T-cell (primary cell): ENCODE measurements at regions of chr15 and their contacts with region 1.

Region 1: DNA sequence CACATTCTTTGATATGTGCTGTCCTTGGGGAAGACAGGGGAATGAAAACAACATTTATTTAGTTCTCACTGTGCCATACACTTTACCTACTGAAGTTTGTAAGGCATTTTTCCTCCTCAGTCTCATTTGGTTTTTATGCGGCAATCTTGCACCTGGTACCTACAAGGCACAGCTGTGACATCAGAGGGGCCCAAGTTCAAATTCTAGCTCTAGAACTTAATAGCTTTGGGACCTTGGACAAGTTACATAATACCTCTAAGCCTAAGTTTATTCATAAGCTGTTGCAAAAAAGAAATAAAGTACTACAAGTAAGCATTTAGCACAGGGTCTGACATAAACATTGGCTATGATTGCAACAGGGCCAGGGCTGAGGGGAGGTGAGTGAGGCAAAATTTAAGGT is 5.6 kb upstream of the FAM81A start:
- DNase-seq: no peak
- ATAC-seq: no peak
- H3K4me3 ChIP-seq: no peak overlapping the region
- H3K4me3 Mint-ChIP-seq: no peak overlapping the region
- H3K27ac ChIP-seq: no peak overlapping the region
- H3K27ac Mint-ChIP-seq: no peak overlapping the region
- H3K4me1 ChIP-seq: peaks cover 2 to 4% of the 10 kb centered on the region in 2 experiments
- H3K4me1 Mint-ChIP-seq: peaks cover 9 to 11% (median 10%) of the 10 kb centered on the region in 3 donors
- H3K27me3 ChIP-seq: peaks cover 12 to 23% of the 10 kb centered on the region in 2 experiments
- H3K27me3 Mint-ChIP-seq: peaks cover 54 to 62% of the 10 kb centered on the region in 2 donors

Region 2: DNA sequence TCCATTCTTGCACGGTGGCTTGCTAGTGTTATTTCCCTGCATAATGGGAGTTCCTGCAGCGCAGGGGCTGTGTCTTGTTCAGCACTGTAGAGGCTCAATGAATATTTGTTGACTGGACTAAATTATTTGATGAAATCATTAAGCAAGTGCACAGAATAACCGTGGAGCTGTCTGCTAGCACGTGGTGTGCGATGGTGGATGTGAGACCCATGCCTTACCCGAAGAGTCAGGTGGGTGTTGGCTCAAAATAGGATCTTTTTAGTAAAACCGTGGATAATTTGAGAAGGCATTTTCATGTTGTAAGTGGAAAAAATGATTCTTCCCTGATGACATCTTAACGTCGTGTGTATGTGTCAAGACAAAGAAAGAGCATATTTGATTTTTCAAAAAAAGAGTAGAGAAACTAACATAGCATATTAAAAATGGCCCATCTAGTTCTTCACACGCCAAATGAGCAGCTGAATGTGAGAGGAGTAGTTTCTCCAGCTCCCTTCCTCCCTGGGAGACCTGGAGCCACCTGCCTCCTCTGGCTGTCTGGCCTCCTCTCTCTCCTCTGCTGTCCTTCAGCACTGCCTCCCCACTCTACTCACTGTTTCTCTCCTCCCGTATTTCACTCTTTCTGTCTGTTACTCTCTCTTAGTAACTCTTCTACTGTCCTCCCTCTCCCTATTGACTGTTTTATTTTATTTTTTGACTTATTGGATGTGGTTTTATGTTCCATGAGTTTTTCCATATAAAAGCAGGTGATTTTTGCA is 11.9 kb after region 1 on chr15:
- CTCF ChIA-PET with region 1: no interaction called
- POLR2A ChIA-PET with region 1: interaction called in 1 of 2 experiments, 10 read pairs
- DNase-seq: no peak
- ATAC-seq: no peak
- H3K4me3 ChIP-seq: no peak overlapping the region
- H3K4me3 Mint-ChIP-seq: no peak overlapping the region
- H3K27ac ChIP-seq: no peak overlapping the region
- H3K27ac Mint-ChIP-seq: no peak overlapping the region
- H3K4me1 ChIP-seq: no peaks in the 10 kb centered on the region
- H3K4me1 Mint-ChIP-seq: peaks cover 0 to 10% (median 0%) of the 10 kb centered on the region in 3 donors
- H3K27me3 ChIP-seq: peaks cover 0 to 11% of the 10 kb centered on the region in 2 experiments
- H3K27me3 Mint-ChIP-seq: peaks cover 8 to 20% of the 10 kb centered on the region in 2 donors